MCF 10A (cell line): ENCODE measurements at regions of chr10 and their contacts with region 1.

Region 1: GRCh38 chr10:132536971-132537712 is 445 bp upstream of the INPP5A start:
- DNase-seq: peak; percentile 98
- H3K4me3 Mint-ChIP-seq: peak overlapping the region; percentile 73
- H3K27ac Mint-ChIP-seq: no peak overlapping the region
- H3K4me1 Mint-ChIP-seq: peaks cover 58% of the 10 kb centered on the region
- H3K27me3 Mint-ChIP-seq: no peaks in the 10 kb centered on the region
- CTCF ChIP-seq: no peak

Region 2: GRCh38 chr10:132522521-132523411 is 14.4 kb before region 1 on chr10:
- CTCF ChIA-PET with region 1: interaction called, 10 read pairs
- POLR2A ChIA-PET with region 1: interaction called, 3 read pairs
- intact Hi-C with region 1: no loop called
- DNase-seq: no peak
- H3K4me3 Mint-ChIP-seq: no peak overlapping the region
- H3K27ac Mint-ChIP-seq: no peak overlapping the region
- H3K4me1 Mint-ChIP-seq: no peaks in the 10 kb centered on the region
- H3K27me3 Mint-ChIP-seq: no peaks in the 10 kb centered on the region
- CTCF ChIP-seq: no peak

Region 3: GRCh38 chr10:132593389-132593788 is 56.2 kb after region 1 on chr10:
- CTCF ChIA-PET with region 1: interaction called, 3 read pairs
- POLR2A ChIA-PET with region 1: interaction called, 6 read pairs
- intact Hi-C with region 1: loop called (anchors 10 kb)
- DNase-seq: no peak
- H3K4me3 Mint-ChIP-seq: no peak overlapping the region
- H3K27ac Mint-ChIP-seq: no peak overlapping the region
- H3K4me1 Mint-ChIP-seq: peaks cover 28% of the 10 kb centered on the region
- H3K27me3 Mint-ChIP-seq: no peaks in the 10 kb centered on the region
- CTCF ChIP-seq: no peak

Region 4: GRCh38 chr10:132637477-132638129 is 100.5 kb after region 1 on chr10:
- CTCF ChIA-PET with region 1: interaction called, 3 read pairs
- POLR2A ChIA-PET with region 1: interaction called, 3 read pairs
- intact Hi-C with region 1: loop called (anchors 2 kb)
- DNase-seq: peak; percentile 63
- H3K4me3 Mint-ChIP-seq: no peak overlapping the region
- H3K27ac Mint-ChIP-seq: peak overlapping the region; percentile 36
- H3K4me1 Mint-ChIP-seq: peaks cover 24% of the 10 kb centered on the region
- H3K27me3 Mint-ChIP-seq: no peaks in the 10 kb centered on the region
- CTCF ChIP-seq: peak; percentile 75